Activated CD4-positive, alpha-beta T cell treated with anti-CD3 and anti-CD28 coated beads, Interleukin-2, amount 10 ng/mL, durations not matched to agents 24 days and 14 days (primary cell): ENCODE measurements at regions of chr7 and their contacts with region 1.

Region 1: GRCh38 chr7:127782654-127783559 is 130.9 kb downstream of the SND1 start:
- DNase-seq: no peak
- H3K4me3 Mint-ChIP-seq: no peak overlapping the region
- H3K27ac Mint-ChIP-seq: no peak overlapping the region
- H3K4me1 Mint-ChIP-seq: peaks cover 20% of the 10 kb centered on the region
- H3K27me3 Mint-ChIP-seq: no peaks in the 10 kb centered on the region

Region 2: DNA sequence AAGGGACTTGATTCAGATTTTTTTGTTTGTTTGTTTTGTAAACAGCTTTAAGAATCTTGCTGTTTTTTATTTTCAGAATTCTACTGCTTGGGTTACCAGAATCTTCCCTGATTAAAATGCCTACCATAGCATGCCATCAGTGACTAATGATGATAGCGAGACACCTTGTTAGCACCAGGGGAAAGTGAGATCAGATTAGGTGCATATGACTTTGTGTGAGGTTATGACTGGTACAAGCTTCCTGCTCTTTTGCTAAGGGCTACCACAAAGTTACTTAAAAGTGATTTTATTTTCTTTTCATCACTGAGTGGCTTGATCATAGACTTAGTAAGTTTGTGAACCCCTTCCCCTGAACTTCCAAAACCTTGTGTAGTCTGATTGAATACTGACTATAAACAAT is 37.5 kb before region 1 on chr7:
- intact Hi-C with region 1: loop called (anchors 5 kb)
- DNase-seq: no peak
- H3K4me3 Mint-ChIP-seq: no peak overlapping the region
- H3K27ac Mint-ChIP-seq: peak overlapping the region; percentile 38
- H3K4me1 Mint-ChIP-seq: peaks cover 31% of the 10 kb centered on the region
- H3K27me3 Mint-ChIP-seq: no peaks in the 10 kb centered on the region

Region 3: DNA sequence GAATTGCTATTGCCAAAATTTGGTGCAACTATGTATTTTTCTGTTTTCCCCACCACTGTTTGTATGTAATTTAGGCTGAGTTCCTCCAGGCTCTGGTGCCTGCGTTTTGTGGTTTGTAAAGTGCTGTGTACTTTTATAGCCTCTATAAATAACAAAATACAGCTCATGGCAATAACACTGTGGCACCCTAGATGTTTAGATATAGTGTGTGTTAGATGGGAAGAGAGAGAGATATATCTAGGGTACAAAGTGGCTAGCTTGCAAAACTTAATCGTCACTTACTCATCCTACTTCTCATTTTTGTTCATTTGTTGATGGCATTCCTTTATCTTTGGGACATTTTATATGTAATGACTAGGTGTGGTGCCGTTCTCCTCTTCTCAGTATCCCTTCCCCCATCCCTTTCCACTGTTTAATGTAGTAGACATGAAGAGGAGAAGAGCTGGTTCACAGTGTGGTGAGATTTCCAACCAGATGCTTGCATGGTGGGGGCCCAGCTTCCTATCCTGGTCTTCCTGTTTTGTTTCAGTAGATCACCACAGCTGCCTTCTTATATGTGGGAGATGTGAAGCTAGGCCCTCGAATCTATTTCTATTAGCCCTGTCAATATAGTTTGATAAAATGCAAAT is 16.0 kb before region 1 on chr7:
- intact Hi-C with region 1: no loop called
- DNase-seq: no peak
- H3K4me3 Mint-ChIP-seq: no peak overlapping the region
- H3K27ac Mint-ChIP-seq: no peak overlapping the region
- H3K4me1 Mint-ChIP-seq: peaks cover 23% of the 10 kb centered on the region
- H3K27me3 Mint-ChIP-seq: no peaks in the 10 kb centered on the region